Head of caudate nucleus (tissue), 42 donors: ENCODE measurements at regions of chr2 and their contacts with region 1.

Region 1: GRCh38 chr2:6896930-6897759 is 19.6 kb downstream of the RSAD2 start:
- DNase-seq: no peak

Region 2: DNA sequence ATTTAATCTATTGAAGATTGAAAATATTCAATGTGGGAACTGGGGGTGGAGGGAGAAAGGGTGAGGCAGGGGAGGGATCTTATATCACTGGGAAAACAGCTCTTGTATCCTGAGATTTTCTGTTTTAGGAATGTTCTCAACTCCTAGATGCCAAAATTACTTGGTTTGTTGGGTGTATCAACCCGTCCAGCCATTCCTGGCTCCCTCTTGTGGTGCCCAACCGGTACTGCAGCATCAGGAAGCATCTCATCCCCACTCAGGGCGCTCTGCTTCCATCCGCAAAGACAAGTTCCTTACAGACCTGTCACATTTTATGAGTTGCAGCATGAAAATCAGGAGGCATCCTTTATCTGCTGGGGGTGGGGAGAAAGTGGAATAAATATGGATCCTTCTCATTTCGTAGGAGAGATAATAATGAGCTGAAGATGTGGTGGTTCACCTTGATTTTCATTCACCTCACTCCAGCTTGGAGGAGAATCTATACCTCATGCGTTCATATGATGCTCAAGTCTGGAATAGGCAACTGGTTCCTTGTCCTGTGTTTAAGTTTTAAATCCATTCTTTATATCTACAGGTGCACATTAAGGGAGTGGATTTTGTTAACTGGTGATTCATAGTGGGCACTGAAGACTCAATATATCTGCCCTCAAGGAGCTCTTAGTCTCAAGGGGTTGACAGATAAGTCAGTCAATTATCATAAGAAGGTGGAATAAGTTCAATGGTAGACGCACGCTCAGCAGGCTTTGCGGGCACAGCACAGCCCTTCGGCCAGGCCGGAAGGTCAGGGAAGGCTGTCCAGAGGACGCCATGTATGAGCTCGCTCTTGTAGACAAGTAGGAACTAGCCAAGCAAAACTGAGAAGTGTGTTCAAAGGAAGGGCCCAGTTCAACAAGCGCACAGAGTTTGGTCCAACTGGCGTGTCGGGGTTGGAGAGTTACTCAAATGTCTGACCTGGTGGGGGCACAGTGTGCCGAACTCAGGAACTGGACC is 147.4 kb after region 1 on chr2:
- intact Hi-C with region 1: loop called (anchors 10 kb)
- DNase-seq: peak in 41 of 42 donors; percentile 64 to 93 (median 82)